Tibial artery (tissue), 4 donors: ENCODE measurements at regions of chr11 and their contacts with region 1.

Region 1: DNA sequence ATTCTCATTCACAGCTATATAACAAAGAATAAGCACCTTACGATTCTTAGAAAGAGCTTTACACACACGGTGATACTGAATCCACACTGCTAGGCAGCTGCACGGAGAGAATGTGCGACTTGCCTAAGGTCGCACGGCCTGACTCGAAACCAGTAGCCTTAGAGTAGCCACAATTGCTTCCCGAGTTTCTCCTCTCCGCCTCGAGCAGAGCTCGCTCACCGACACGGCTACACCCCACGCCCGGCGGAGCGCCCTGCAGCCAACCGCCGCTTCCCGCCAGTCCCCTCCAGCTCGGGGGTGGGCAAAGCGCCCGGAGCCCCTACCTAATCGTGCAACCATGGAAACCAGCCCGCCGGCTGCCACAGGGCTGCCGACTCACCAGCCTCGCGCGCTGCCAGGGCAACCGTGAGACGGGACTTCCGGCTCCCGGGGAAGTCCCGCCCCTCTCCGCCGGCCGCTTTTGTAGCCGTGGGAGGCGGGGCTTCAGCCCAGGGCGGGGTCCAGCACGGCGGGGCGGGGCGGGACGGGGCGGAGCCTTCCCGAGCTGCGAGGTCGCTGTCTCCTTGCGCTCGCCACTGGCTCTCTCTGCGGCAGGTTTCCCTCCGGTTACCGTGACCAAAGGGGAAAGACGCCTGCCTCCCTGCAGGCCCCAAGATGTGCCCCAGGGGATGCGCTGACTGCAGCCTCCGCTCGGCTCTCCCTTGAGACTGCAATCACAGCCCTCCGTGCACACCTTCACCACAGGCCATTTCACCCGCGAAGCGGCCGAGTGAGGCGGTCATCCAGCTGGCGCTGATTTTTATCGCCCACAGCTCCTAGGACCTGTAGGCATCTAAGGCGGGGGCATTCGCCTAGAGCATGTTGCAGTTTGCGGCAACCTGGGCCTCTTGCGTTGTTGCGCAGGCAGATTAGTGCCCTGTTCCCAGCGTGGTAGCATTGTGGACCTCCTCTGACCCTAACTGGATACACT is 1.1 kb downstream of the BSCL2 start:
- DNase-seq: peak; percentile 93 to 97
- H3K4me3 ChIP-seq: peak overlapping the region; percentile 61 to 71
- H3K27ac ChIP-seq: peak overlapping the region; percentile 68 to 85
- H3K4me1 ChIP-seq: peaks cover 0 to 40% (median 35%) of the 10 kb centered on the region in 4 donors
- H3K27me3 ChIP-seq: no peaks in the 10 kb centered on the region
- CTCF ChIP-seq: no peak

Region 2: DNA sequence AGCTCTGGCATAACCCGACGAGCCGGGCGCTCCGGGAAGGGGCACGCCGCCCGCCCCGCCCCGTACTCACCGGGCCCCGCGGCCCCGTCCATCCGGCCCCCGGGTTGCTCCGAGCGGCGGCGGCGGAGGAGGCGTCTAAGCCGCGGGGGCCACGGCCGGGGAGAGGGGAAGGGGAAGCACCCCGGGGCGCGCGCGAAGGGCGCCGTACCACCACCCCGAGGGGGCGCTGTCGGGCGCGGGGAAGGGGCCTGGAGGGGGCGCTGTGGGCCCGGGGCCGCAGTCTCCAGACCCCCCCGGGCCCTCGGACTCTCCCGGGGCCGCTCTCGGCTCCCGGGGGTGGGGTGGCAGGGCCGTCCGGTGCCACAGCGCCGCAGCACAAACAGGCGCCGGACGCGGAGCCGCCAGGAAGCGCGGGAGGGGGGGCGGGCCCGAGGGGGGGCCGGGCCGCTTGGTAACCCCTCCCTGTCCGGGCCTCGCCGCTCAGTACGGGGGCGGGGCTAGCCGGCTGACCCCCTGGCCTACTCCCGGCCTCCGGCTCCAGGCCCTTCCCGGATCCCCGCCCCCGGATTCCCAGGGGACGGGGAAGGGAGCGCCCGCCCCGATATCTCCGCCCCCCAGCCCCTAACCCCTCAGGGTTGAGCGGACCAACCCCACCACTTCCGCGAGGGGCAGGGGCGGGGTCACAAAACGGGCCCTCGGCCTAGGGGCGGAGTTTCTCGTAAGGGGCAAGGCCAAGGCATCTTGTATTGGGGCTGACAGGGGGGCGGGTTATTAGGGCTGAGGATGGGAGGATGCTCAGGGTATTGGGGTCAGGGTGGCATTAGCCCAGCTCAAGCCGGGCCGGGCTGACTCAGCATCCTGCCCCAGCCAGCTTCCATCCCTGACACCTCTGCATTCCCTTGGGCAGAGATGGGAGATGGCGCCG is 93.5 kb before region 1 on chr11 and contains the starts of genes EML3 and ROM1:
- intact Hi-C with region 1: loop called (anchors 10 kb)
- DNase-seq: peak; percentile 91 to 96
- H3K4me3 ChIP-seq: peak within 1 kb of the TSS; percentile 85 to 88
- H3K27ac ChIP-seq: peak within 1 kb of the TSS; percentile 95 to 98
- H3K4me1 ChIP-seq: peaks cover 0 to 33% (median 27%) of the 10 kb centered on the region in 4 donors
- H3K27me3 ChIP-seq: no peaks in the 10 kb centered on the region
- CTCF ChIP-seq: peak; percentile 82 to 92